ENCODE measurements at regions of chr1 and their contacts with region 1.

Region 1: GRCh38 chr1:29235955-29236684 is at the start of gene PTPRU:
- DNase-seq: peak in 1 of 2 donors; percentile 83
- H3K4me3 ChIP-seq: peak within 1 kb of the TSS; percentile 80 to 98
- H3K27ac ChIP-seq: peak within 1 kb of the TSS; percentile 60 to 79
- H3K4me1 ChIP-seq: peaks cover 6 to 18% of the 10 kb centered on the region in 2 donors
- H3K27me3 ChIP-seq: no peaks in the 10 kb centered on the region
- CTCF ChIP-seq: peak; percentile 37 to 99 (median 60)
- total RNA-seq, gene PTPRU: 32.7 TPM

Region 2: DNA sequence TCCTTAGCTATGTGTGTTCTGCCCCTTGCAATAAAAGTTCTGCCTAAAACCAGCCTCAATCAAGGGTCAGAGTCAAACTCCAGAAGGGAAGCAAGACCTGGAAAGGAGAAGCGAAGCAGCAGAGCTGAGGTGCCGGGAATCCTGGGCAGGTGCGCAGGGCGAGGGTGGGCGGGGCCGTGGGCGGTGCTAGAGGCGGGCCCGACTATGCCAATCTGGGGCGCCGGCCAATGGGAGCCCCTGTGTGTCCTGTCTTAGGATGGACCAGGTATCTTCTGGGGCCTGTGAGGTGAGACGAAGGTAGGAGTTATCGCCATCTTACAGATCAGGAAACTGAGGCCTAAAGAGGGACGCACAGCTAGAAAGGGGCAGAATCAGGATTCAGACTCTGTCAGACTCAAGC is 120.5 kb after region 1 on chr1:
- intact Hi-C with region 1: no loop called
- DNase-seq: no peak
- H3K4me3 ChIP-seq: no peak overlapping the region
- H3K27ac ChIP-seq: no peak overlapping the region
- H3K4me1 ChIP-seq: no peaks in the 10 kb centered on the region
- H3K27me3 ChIP-seq: no peaks in the 10 kb centered on the region
- CTCF ChIP-seq: no peak

Region 3: DNA sequence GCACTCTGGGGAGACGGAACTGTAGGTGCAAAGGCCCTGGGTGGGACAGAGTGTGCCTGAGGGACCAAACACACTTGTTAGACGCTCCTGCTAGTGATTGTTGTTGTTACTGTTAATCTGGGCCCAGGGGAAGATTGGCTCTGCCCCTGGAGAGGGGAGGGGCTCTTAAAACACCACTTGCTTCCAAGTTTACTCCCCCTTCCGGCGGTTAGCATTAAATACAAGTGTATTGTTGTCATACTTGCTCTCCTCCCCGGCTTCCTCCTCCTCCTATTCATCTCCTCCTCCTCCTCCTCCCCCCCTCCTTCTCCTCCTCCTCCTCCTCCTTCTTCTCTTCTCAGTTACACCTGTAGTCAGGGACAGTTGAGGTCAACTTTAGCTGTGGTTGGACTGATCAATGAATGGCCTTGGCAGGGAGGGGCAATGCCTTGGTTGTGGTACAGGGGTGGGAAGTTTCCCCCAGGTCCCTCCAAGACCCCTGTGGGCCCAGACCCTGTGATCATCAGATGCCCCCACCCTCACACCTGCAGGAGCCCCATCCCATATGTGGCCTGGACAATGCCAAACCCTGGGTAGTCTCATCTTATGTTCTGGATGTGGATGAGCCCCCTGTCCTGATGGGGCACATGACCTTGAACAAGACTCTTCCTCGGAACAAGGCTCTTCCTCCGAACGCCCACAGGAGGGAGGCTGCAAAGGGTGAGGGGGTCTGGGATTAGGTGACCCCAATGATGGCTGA is 217.6 kb after region 1 on chr1:
- intact Hi-C with region 1: loop called (anchors 2 kb)
- DNase-seq: no peak
- H3K4me3 ChIP-seq: no peak overlapping the region
- H3K27ac ChIP-seq: no peak overlapping the region
- H3K4me1 ChIP-seq: no peaks in the 10 kb centered on the region
- H3K27me3 ChIP-seq: no peaks in the 10 kb centered on the region
- CTCF ChIP-seq: peak in 1 of 3 experiments; percentile 30

Region 4: GRCh38 chr1:29849038-29849750 is 613.1 kb after region 1 on chr1:
- intact Hi-C with region 1: loop called (anchors 5 kb)
- DNase-seq: peak in 1 of 2 donors; percentile 49
- H3K4me3 ChIP-seq: no peak overlapping the region
- H3K27ac ChIP-seq: no peak overlapping the region
- H3K4me1 ChIP-seq: no peaks in the 10 kb centered on the region
- H3K27me3 ChIP-seq: no peaks in the 10 kb centered on the region
- CTCF ChIP-seq: peak in 2 of 3 experiments; percentile 14 to 44

Region 5: DNA sequence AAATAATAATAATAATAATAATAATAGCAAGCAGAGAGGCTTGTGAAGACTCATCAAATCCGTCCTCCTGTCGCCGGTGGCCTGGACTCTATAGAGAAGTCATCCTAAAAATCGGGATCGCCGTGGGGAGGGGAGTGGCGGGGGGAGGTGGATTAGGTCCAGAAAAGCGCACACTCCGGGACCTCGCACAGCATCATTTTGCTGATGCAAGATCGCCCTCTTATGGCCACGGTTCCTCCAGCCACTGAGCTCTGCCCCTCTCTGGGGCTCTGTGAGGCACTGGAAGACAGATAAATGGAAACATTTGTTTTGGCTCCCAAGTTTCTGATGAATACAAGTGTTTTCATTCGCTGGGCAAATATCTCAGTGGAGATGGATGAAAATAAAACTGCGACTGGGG is 875.3 kb after region 1 on chr1:
- intact Hi-C with region 1: loop called (anchors 2 kb)
- DNase-seq: no peak
- H3K4me3 ChIP-seq: no peak overlapping the region
- H3K27ac ChIP-seq: no peak overlapping the region
- H3K4me1 ChIP-seq: no peaks in the 10 kb centered on the region
- H3K27me3 ChIP-seq: no peaks in the 10 kb centered on the region
- CTCF ChIP-seq: peak in 2 of 3 experiments; percentile 50 to 65

Region 6: DNA sequence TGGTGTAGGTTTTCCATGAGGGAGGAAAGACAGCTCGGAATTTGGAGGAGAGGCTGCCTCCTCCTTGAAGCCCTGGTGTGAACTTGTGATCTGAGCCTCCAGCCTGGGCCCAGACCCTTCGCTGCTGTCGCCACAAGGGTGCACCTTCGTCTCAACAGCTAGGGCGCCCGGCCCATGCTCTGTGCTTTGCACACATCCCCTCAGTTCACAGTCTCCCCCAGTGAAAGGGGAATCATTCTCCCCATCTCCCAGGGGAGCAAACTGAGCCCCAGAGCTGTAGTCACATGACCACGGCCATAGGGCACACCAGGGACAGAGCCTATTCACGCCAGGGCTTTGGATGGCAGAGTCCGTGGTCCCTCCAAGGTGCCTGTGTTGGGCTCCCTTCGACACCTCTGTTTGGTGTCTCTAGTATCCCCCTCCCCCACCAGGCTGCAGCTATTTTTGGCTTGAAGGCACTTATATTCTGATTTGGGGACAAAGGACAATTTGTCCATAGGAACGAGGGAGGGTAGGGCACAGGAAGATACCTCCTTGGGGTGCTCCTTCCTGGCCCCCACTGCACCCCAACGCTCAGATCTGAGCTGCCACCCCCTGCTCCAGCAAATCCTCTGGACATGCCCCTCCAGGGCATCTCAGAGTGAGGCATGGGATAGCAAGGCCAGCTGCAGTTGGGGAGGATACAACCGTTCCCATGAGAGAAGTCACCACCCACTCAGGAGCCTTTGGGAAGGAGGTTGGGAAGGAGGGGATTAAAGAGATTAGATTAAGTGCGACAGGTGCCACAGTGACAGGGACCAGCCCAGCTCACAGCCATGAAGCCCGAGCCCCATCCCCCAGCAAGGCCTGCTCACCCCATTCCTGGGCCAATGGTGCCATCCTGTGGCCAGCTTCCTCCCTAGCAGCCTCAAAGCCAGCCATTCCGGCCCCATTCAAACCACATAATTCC is 1471.6 kb after region 1 on chr1:
- intact Hi-C with region 1: loop called (anchors 1 kb)
- DNase-seq: no peak
- H3K4me3 ChIP-seq: no peak overlapping the region
- H3K27ac ChIP-seq: no peak overlapping the region
- H3K4me1 ChIP-seq: no peaks in the 10 kb centered on the region
- H3K27me3 ChIP-seq: no peaks in the 10 kb centered on the region
- CTCF ChIP-seq: peak; percentile 66 to 83 (median 82)